Panc1 (cell line): ENCODE measurements at regions of chr5 and their contacts with region 1.

Region 1: DNA sequence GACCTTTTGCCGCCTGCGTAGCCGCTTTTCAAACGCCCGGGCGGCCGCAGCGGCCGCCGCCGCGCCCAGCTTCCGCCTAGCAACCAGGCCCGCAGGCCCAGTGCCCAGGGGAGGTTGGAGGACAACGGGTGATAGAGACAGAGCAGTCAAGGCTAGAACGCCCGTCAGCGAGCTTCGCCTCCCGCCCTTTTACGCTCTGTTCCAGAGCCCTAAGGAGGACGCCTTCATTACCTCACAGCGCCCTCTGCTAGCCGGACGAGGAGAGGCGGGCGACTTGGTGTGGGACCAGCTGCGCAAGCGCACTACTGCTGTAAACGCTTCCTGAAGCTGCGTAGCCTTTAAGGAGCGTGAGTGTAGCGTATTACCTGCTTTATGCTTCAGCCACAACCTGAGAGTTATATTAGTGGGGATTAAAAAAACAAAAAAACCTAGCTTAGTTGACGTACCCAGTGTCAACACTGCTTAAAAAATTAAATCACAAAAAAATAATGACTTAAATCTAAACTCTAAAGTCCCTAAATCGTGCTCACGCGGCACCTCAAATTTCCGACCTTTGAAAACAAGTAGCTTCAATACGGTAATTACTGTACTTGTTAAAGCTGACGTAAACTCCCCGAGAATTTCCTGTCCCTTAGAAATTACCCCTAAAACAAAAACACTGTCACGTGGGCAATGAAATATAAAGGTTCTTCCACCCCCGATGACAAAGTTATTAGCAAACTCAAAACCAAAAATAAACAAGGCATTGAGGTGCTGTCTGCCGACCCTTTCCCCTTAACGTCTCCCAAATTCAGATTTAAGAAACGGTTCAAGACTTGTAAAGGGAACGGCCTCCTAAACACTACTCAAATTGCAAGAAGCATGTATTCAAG is at the start of gene CEP120:
- DNase-seq: peak; percentile 98
- ATAC-seq: peak; percentile 99
- H3K4me3 ChIP-seq: peak within 1 kb of the TSS; percentile 94 to 97
- H3K27ac ChIP-seq: peak within 1 kb of the TSS; percentile 97
- H3K4me1 ChIP-seq: peaks cover 19% of the 10 kb centered on the region
- H3K27me3 ChIP-seq: no peaks in the 10 kb centered on the region
- CTCF ChIP-seq: peak; percentile 92
- total RNA-seq, gene CEP120: 20.1 TPM

Region 2: GRCh38 chr5:123209502-123210012 is 214.0 kb before region 1 on chr5:
- CTCF ChIA-PET with region 1: no interaction called
- POLR2A ChIA-PET with region 1: no interaction called
- in situ Hi-C with region 1: no loop called
- intact Hi-C with region 1: no loop called
- DNase-seq: no peak
- ATAC-seq: no peak
- H3K4me3 ChIP-seq: no peak overlapping the region
- H3K27ac ChIP-seq: no peak overlapping the region
- H3K4me1 ChIP-seq: no peaks in the 10 kb centered on the region
- H3K27me3 ChIP-seq: no peaks in the 10 kb centered on the region; the same call in 1 of the 2 replicates
- CTCF ChIP-seq: no peak

Region 3: GRCh38 chr5:123249446-123249845 is 174.1 kb before region 1 on chr5:
- CTCF ChIA-PET with region 1: no interaction called
- POLR2A ChIA-PET with region 1: no interaction called
- in situ Hi-C with region 1: no loop called
- intact Hi-C with region 1: no loop called
- DNase-seq: no peak
- ATAC-seq: no peak
- H3K4me3 ChIP-seq: no peak overlapping the region
- H3K27ac ChIP-seq: no peak overlapping the region
- H3K4me1 ChIP-seq: no peaks in the 10 kb centered on the region
- H3K27me3 ChIP-seq: no peaks in the 10 kb centered on the region; the same call in 1 of the 2 replicates
- CTCF ChIP-seq: no peak

Region 4: DNA sequence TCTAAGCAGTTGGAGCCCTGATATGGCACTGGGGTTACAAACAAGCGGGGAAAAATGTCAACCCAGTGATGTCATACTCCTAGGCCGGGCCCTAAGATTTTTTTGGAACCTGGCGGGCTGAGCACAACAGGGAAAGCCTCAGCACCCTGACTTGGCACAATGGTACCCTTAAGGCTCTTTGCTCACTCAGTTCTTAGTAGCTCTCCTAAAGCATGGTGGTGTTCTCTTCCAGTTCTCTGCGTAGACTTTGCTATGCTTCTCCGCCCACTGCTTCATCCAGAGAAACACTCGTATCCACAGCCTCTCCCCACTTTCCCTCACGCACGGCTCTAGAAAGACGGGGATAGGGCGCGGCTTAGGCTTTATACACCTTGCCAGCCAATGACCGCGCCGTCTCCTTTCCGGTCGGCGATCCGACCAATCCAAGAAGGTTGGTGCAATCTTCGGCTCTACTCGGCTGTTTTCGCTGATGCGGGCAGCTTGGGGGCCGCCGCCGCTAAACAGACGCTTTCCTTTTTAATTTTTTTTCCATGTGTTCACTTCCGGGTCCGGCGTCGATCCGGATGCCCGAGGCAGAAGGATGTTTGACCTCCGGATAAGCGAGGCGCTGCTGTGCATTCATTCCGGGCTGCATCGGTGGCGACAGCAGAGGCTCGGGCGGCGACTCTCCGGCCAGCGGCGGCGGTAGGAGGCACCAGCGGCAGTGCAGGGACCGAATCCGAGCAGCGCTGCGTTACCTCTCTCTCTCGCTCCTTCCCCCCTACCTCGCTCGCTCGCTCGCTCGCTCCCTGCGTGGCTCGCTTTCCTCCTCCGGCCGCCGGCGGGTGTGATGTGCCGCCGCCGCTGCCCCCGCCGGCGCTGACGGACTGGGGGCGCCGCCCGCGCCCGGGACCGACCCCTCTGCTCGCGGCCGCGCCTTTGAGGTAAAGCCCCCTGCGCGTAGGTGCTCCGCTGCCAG is 88.4 kb after region 1 on chr5 and contains the start of gene CSNK1G3:
- CTCF ChIA-PET with region 1: no interaction called
- POLR2A ChIA-PET with region 1: interaction called, 3 read pairs
- in situ Hi-C with region 1: no loop called
- intact Hi-C with region 1: loop called (anchors 5 kb)
- DNase-seq: peak; percentile 90
- ATAC-seq: peak; percentile 98
- H3K4me3 ChIP-seq: peak within 1 kb of the TSS; percentile 71 to 87
- H3K27ac ChIP-seq: peak within 1 kb of the TSS; percentile 95
- H3K4me1 ChIP-seq: peaks cover 24% of the 10 kb centered on the region
- H3K27me3 ChIP-seq: no peaks in the 10 kb centered on the region; the same call in 1 of the 2 replicates
- CTCF ChIP-seq: no peak
- total RNA-seq, gene CSNK1G3: 40.8 TPM

Region 5: GRCh38 chr5:123545506-123545905 is 122.0 kb after region 1 on chr5:
- CTCF ChIA-PET with region 1: no interaction called
- POLR2A ChIA-PET with region 1: no interaction called
- in situ Hi-C with region 1: no loop called
- intact Hi-C with region 1: loop called (anchors 1 kb)
- DNase-seq: peak; percentile 22
- ATAC-seq: 0 out of 2 replicates have a peak, but pooled peaks have one; percentile 66
- H3K4me3 ChIP-seq: no peak overlapping the region
- H3K27ac ChIP-seq: no peak overlapping the region
- H3K4me1 ChIP-seq: peaks cover 2% of the 10 kb centered on the region; the same call in 1 of the 2 replicates
- H3K27me3 ChIP-seq: no peaks in the 10 kb centered on the region
- CTCF ChIP-seq: peak; percentile 78; the same call in 1 of the 2 replicates

Region 6: DNA sequence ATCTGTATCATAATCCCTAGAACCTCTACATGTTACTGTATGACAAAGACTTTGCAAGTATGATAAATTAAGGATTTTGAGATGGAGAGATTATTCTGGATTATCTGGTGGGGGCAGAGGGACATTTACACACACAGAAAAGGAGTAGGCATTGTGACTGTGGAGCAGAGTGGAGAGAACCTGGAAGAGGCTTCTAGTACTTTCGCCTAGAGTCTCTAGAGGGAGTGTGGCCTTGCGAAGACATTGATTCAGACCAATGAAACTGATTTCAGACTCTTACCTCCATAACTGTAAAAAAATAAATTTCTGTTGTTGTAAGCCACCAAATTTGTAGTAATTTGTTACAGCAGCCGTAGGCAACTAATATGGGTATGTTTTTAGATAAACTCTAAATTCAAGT is 134.4 kb after region 1 on chr5:
- CTCF ChIA-PET with region 1: no interaction called
- POLR2A ChIA-PET with region 1: no interaction called
- in situ Hi-C with region 1: no loop called
- intact Hi-C with region 1: no loop called
- DNase-seq: no peak
- ATAC-seq: no peak
- H3K4me3 ChIP-seq: no peak overlapping the region
- H3K27ac ChIP-seq: no peak overlapping the region
- H3K4me1 ChIP-seq: no peaks in the 10 kb centered on the region
- H3K27me3 ChIP-seq: no peaks in the 10 kb centered on the region
- CTCF ChIP-seq: peak; percentile 13; the same call in 1 of the 2 replicates

Region 7: DNA sequence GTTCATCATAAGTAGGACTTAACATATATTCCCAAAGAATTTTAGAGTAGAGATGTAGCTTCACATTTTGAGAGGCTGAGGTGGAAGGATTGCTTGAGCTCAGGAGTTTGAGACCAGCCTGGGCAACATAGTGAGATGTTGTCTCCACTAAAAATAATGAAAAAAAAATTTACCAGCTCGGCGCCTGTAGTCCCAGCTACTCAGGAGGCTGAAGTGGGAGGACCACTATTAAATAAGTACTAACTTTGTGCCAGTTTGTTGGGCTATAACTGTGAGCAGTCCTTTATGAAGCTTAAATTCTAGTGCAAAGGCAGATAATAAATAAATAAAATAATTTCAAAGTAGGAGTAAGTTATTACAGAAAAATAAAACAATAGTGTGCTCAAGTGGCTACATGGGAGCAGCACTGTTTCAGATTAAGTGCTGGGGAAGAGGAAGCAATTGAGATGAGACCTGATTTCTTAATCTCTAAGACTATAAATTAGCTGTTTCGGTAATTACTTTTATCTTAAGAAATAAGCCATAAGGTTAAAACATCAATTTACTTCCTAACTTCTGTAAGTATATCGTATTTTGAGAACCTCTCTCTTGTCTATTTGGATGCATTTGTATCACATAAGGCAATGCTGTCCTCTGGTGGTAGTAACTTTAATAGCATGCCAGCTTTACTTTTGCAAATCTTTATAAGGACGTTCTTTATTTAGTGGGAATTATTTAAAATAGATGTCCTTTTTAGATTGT is 187.3 kb after region 1 on chr5:
- CTCF ChIA-PET with region 1: interaction called, 9 read pairs
- POLR2A ChIA-PET with region 1: no interaction called
- in situ Hi-C with region 1: no loop called
- intact Hi-C with region 1: loop called (anchors 10 kb)
- DNase-seq: peak; percentile 55
- ATAC-seq: peak; percentile 76
- H3K4me3 ChIP-seq: no peak overlapping the region
- H3K27ac ChIP-seq: no peak overlapping the region
- H3K4me1 ChIP-seq: no peaks in the 10 kb centered on the region
- H3K27me3 ChIP-seq: no peaks in the 10 kb centered on the region
- CTCF ChIP-seq: peak; percentile 90; the same call in 1 of the 2 replicates